ENCODE measurements at regions of chr14 and their contacts with region 1.

Region 1: DNA sequence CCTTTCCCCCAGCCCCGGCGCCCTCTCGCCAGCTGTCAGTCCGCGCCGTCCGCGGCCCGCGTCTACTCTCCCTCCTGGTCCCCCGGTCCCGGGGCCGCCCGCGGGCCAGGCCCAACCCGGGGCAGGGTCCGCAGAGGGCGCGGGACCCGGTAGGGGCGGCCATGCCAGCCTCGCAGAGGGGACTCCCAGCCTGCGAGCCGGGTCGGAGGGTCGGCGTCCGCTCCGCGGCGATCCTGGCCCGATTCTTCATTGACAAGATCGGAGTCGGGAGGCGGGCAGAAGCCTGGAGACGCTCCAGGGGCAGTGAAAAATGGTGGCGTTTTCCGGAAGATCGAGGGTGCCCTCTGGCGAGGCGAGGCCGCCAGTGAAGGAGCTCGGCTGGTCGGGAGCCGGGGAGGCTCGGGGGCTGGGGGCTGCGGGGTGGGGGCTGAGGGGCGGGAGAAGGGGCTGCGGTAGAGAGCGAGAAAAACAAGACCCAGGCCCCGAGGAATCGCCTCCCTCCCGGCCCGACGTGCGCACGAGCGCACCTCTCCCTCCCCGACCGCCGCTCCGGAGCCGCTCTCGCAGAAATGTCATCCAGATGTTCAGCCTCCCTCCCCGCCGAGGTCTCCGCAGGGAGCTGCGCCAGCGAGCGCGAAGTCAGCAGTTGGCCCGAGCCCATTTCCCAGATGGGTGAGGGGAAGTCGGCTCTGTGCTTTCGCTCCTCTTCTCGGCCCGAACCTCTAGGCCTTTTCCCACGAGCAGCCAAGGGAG is 647 bp upstream of the TGFB3 start:
- DNase-seq: peak; percentile 84 to 87
- ATAC-seq: peak; percentile 60 to 82 (median 70)
- H3K4me3 ChIP-seq: peak overlapping the region; percentile 60 to 92 (median 78)
- H3K27ac ChIP-seq: peak overlapping the region; percentile 88 to 98 (median 96)
- H3K4me1 ChIP-seq: peaks cover 0 to 72% (median 42%) of the 10 kb centered on the region in 9 donors
- H3K27me3 ChIP-seq: no peaks in the 10 kb centered on the region
- CTCF ChIP-seq: peak; percentile 47 to 78 (median 68)

Region 2: GRCh38 chr14:75577729-75578101 is 404.7 kb before region 1 on chr14:
- intact Hi-C with region 1: loop called in 1 of 10 experiments (anchors 10 kb)
- DNase-seq: peak; percentile 81 to 89
- ATAC-seq: peak; percentile 81 to 95 (median 89)
- H3K4me3 ChIP-seq: peak overlapping the region; percentile 43 to 78 (median 62)
- H3K27ac ChIP-seq: peak overlapping the region in 9 of 10 donors; percentile 40 to 84 (median 78)
- H3K4me1 ChIP-seq: peaks cover 8 to 30% (median 20%) of the 10 kb centered on the region in 9 donors
- H3K27me3 ChIP-seq: no peaks in the 10 kb centered on the region
- CTCF ChIP-seq: peak; percentile 61 to 88 (median 82)

Region 3: DNA sequence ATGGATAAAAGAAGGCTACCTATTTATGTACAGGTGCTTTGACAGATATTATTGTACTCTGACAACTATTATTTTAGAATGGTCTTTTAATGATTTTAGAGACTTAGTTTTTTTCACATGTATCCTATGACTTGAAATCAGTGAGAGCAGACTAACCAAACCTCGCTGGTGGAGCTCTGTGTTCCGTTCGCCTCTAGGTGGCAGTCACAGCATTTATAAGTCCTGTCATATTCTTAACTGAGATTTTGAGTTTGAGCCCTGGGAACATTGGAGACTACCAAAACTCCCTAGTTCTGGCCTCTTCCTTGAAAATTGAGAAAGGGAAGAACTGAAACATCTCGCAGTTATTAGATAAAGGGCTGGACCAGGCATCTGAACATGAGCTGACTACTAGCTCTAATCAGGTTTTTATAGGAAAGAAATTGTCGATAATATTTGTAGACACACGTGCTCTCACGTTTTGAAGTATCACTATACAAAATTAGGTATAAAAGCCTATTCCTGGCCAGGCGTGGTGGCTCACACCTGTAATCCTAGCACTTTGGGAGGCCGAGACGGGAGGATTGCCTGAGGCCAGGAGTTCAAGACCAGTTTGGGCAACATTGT is 273.1 kb before region 1 on chr14:
- intact Hi-C with region 1: loop called (anchors 1 to 5 kb)
- DNase-seq: peak; percentile 46 to 84
- ATAC-seq: peak in 7 of 8 donors; percentile 69 to 84 (median 74)
- H3K4me3 ChIP-seq: no peak overlapping the region
- H3K27ac ChIP-seq: no peak overlapping the region
- H3K4me1 ChIP-seq: peaks cover 2 to 27% (median 17%) of the 10 kb centered on the region in 9 donors
- H3K27me3 ChIP-seq: no peaks in the 10 kb centered on the region
- CTCF ChIP-seq: peak; percentile 52 to 92 (median 79)

Region 4: GRCh38 chr14:75794615-75795038 is 187.8 kb before region 1 on chr14:
- intact Hi-C with region 1: loop called in 8 of 10 experiments (anchors 1 to 10 kb)
- DNase-seq: no peak
- ATAC-seq: peak; percentile 93 to 99 (median 97)
- H3K4me3 ChIP-seq: no peak overlapping the region
- H3K27ac ChIP-seq: peak overlapping the region in 3 of 10 donors; percentile 19 to 46 (median 37)
- H3K4me1 ChIP-seq: peaks cover 0 to 12% (median 0%) of the 10 kb centered on the region in 9 donors
- H3K27me3 ChIP-seq: no peaks in the 10 kb centered on the region
- CTCF ChIP-seq: peak; percentile 22 to 76 (median 52)

Region 5: DNA sequence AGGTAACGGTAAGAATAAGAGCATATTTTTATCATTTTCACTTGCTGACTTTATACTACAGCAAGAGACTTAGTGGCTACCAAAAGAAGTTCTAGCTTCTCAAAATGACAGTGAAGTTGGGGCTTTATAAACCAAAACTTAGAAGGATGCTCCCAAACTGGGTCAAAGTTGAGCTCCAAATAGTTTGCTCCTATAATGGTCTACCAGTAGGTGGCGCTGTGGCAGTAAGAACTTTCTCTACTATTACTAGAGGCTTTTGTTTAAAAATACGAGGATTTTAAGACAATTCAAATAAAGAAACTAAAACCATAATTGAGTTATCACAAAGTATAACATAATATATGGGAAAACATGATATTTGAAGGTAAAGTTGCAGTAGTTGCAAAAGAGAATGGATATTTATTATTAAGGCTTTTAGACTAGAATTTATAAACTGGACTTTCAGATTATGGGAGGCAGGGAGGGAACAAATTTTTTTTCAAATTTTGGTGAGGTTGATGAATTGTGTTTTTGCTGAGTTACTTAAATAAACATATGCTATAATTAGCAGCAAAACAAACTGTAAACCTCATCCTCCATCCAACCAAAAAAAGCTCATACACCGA is 75.7 kb before region 1 on chr14:
- intact Hi-C with region 1: loop called (anchors 1 to 5 kb)
- DNase-seq: peak; percentile 25 to 79
- ATAC-seq: peak in 7 of 8 donors; percentile 59 to 82 (median 73)
- H3K4me3 ChIP-seq: no peak overlapping the region
- H3K27ac ChIP-seq: no peak overlapping the region
- H3K4me1 ChIP-seq: peaks cover 0 to 27% (median 13%) of the 10 kb centered on the region in 9 donors
- H3K27me3 ChIP-seq: no peaks in the 10 kb centered on the region
- CTCF ChIP-seq: peak; percentile 81 to 97 (median 91)

Region 6: GRCh38 chr14:76080025-76080424 is 97.6 kb after region 1 on chr14:
- intact Hi-C with region 1: no loop called
- DNase-seq: peak in 1 of 2 donors; percentile 29
- ATAC-seq: peak; percentile 51 to 92 (median 73)
- H3K4me3 ChIP-seq: no peak overlapping the region
- H3K27ac ChIP-seq: peak overlapping the region in 1 of 10 donors; percentile 8
- H3K4me1 ChIP-seq: peaks cover 0 to 19% (median 0%) of the 10 kb centered on the region in 9 donors
- H3K27me3 ChIP-seq: no peaks in the 10 kb centered on the region
- CTCF ChIP-seq: no peak

Region 7: DNA sequence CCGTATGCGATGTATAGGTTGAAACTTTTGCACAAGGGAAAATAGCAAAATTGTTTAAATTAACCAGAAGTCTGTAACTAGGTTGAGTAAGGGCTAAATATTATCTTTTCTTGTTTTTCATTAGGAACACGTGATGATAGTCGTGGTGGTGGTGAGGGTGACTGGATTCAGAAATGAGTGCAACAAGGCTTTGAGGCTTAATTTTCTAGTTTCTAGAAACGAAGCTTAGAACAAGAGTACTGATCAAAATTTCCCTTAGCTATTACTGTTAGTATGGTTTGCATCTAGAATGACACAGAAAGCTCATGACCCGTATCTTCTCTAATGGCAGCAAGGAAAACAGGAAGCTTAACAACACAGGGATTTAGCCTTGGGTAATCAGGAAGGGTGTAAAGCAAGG is 1732.5 kb after region 1 on chr14:
- intact Hi-C with region 1: no loop called
- DNase-seq: no peak
- ATAC-seq: no peak
- H3K4me3 ChIP-seq: no peak overlapping the region
- H3K27ac ChIP-seq: no peak overlapping the region
- H3K4me1 ChIP-seq: peaks cover 0 to 6% (median 2%) of the 10 kb centered on the region in 9 donors
- H3K27me3 ChIP-seq: no peaks in the 10 kb centered on the region
- CTCF ChIP-seq: no peak

Measured in heart right ventricle (tissue), 16 donors.